HCT116 (cell line): ENCODE measurements at regions of chr7 and their contacts with region 1.

Region 1: GRCh38 chr7:131302876-131303707 is 24.6 kb upstream of the MKLN1 start:
- DNase-seq: peak; percentile 39
- ATAC-seq: peak; percentile 94
- H3K4me3 ChIP-seq: no peak overlapping the region
- H3K27ac ChIP-seq: no peak overlapping the region
- H3K4me1 ChIP-seq: peaks cover 0 to 8% of the 10 kb centered on the region in 2 experiments; a peak in 1 of 4 replicates
- H3K27me3 ChIP-seq: no peaks in the 10 kb centered on the region
- CTCF ChIP-seq: peak; percentile 69 to 74 (median 72); a peak in 5 of 6 replicates
- POLR2A ChIP-seq: no peak
- RAD21 ChIP-seq: peak; percentile 94

Region 2: DNA sequence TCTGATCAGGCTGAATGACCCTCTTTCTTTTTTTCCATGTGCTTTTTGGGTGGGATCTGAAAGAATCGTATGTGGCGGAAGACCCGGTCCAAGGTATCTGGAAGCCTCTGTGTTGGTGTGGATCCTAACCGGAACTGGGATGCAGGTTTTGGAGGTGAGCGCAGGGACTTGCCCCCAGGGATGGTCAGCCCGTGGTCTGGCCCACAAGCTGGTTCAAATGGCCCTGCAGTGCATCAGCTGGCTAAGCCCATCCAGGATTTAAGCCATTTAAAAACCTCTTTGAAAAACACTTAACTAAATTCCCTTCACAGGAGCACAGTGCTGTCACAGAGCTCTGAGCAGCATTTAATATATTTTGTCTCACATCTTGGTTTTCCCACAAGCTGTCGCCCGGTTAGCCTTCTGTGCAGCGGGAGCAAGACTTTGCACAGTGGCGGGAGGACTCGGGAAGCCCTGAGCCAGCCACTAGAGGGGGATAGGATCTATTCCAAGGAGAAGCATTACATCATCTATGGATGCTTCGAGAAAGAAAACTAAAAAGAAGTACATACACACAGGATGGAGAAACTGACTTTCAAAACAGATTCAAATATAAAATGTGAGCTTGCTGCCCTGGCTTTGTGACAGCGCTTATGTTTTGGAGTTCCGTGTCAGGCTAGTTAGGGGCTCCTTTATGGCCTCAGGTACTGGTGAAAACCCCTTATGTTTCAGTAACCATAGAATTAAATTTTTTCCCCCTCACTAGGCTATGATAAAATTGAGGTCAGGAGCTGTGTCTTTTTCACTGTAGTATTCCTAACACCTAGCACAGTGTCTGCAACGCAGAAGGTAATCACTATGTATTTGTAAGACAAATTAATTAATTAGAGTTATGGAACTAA is 1025.1 kb before region 1 on chr7:
- CTCF ChIA-PET with region 1: no interaction called
- POLR2A ChIA-PET with region 1: no interaction called
- RAD21 ChIA-PET with region 1: no interaction called
- intact Hi-C with region 1: no loop called
- DNase-seq: peak; percentile 44
- ATAC-seq: peak; percentile 96
- H3K4me3 ChIP-seq: no peak overlapping the region
- H3K27ac ChIP-seq: no peak overlapping the region
- H3K4me1 ChIP-seq: peaks cover 0 to 7% of the 10 kb centered on the region in 2 experiments; a peak in 1 of 4 replicates
- H3K27me3 ChIP-seq: no peaks in the 10 kb centered on the region
- CTCF ChIP-seq: peak; percentile 57 to 75 (median 70); a peak in 5 of 6 replicates
- POLR2A ChIP-seq: no peak
- RAD21 ChIP-seq: peak; percentile 81

Region 3: GRCh38 chr7:131068604-131069021 is 234.5 kb before region 1 on chr7:
- CTCF ChIA-PET with region 1: interaction called, 13 read pairs
- POLR2A ChIA-PET with region 1: interaction called, 3 read pairs
- RAD21 ChIA-PET with region 1: interaction called in 1 of 2 experiments, 3 read pairs
- intact Hi-C with region 1: loop called (anchors 1 kb)
- DNase-seq: no peak
- ATAC-seq: peak; percentile 53
- H3K4me3 ChIP-seq: no peak overlapping the region
- H3K27ac ChIP-seq: no peak overlapping the region
- H3K4me1 ChIP-seq: peaks cover 22 to 35% of the 10 kb centered on the region in 2 experiments
- H3K27me3 ChIP-seq: no peaks in the 10 kb centered on the region
- CTCF ChIP-seq: peak; percentile 16 to 43 (median 39); a peak in 3 of 6 replicates
- POLR2A ChIP-seq: no peak
- RAD21 ChIP-seq: peak; percentile 63

Region 4: DNA sequence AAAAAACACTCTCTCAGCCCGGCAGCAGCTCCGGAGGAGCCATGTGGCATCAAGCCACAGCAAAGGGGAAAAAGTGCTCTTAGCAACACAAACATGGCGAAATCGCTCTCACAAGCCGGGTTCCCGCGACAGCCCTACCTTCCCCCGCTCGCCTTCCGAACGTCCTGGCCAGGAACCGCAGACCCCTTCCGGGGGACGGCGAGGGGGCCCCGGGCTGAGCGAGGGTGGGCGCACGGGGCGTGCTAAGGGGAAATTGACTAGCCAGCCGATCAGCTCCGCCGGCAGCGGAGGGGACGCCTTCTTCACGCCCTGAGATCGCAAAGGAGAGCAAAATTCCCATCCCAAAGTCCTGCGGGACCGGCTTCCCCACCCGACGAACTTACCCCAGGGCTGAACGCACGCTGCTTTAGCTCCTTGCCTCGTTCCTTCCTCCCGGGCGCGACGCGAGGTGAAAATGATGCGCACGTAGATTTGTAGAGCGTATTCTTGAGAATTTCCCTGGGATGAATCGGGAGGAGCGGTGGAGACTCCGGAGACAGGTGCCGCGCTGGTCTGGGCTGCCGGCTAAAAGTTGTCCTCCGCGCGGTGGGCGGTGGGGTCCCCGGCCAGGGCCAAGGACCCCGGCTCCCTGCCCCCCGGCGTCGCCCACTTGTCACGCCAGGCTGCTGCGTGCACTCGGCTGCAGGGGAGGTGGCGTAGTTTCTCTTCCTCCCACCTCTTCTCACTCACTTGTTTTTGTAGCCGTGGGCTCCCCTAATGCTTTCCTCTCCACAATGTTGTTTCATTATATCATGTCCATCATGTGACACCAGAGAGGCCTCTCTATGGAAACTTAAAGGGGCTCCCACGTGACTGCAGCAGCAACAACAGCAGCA is 195.5 kb before region 1 on chr7:
- CTCF ChIA-PET with region 1: interaction called, 5 read pairs
- POLR2A ChIA-PET with region 1: no interaction called
- RAD21 ChIA-PET with region 1: no interaction called
- intact Hi-C with region 1: loop called (anchors 2 kb)
- DNase-seq: peak; percentile 44
- ATAC-seq: peak; percentile 33
- H3K4me3 ChIP-seq: peak overlapping the region; percentile 80 to 88
- H3K27ac ChIP-seq: peak overlapping the region; percentile 87
- H3K4me1 ChIP-seq: peaks cover 26 to 47% of the 10 kb centered on the region in 2 experiments
- H3K27me3 ChIP-seq: no peaks in the 10 kb centered on the region
- CTCF ChIP-seq: no peak
- POLR2A ChIP-seq: no peak
- RAD21 ChIP-seq: no peak